Adrenal gland (tissue), 19 donors: ENCODE measurements at regions of chr6 and their contacts with region 1.

Region 1: GRCh38 chr6:30922447-30922852 is 8.4 kb downstream of the VARS2 start:
- DNase-seq: no peak
- H3K4me3 ChIP-seq: no peak overlapping the region
- H3K27ac ChIP-seq: no peak overlapping the region
- H3K4me1 ChIP-seq: no peaks in the 10 kb centered on the region
- H3K27me3 ChIP-seq: no peaks in the 10 kb centered on the region
- CTCF ChIP-seq: no peak
- POLR2A ChIP-seq: no peak

Region 2: GRCh38 chr6:30690403-30691207 is 231.8 kb before region 1 on chr6 and contains the start of gene NRM:
- intact Hi-C with region 1: no loop called
- DNase-seq: peak; percentile 88 to 93 (median 91)
- H3K4me3 ChIP-seq: peak within 1 kb of the TSS; percentile 37 to 71 (median 60)
- H3K27ac ChIP-seq: peak within 1 kb of the TSS; percentile 62 to 84 (median 79)
- H3K4me1 ChIP-seq: peaks cover 19 to 41% of the 10 kb centered on the region in 2 donors
- H3K27me3 ChIP-seq: no peaks in the 10 kb centered on the region
- CTCF ChIP-seq: no peak
- POLR2A ChIP-seq: peak in 1 of 2 donors; percentile 46
- total RNA-seq, gene NRM: 1.8 to 22.6 (median 10.0) TPM

Region 3: GRCh38 chr6:31079656-31080261 is 157.3 kb after region 1 on chr6:
- intact Hi-C with region 1: loop called (anchors 5 kb)
- DNase-seq: peak; percentile 49 to 89 (median 72)
- H3K4me3 ChIP-seq: peak overlapping the region in 1 of 4 donors; percentile 28
- H3K27ac ChIP-seq: no peak overlapping the region
- H3K4me1 ChIP-seq: peaks cover 0 to 3% of the 10 kb centered on the region in 2 donors
- H3K27me3 ChIP-seq: no peaks in the 10 kb centered on the region
- CTCF ChIP-seq: peak; percentile 68 to 81 (median 78)
- POLR2A ChIP-seq: no peak